Activated naive CD8-positive, alpha-beta T cell treated with anti-CD3 and anti-CD28 coated beads, Interleukin-2, amount 10 ng/mL, durations not matched to agents 7 days and 5 days (primary cell): ENCODE measurements at regions of chr3 and their contacts with region 1.

Region 1: GRCh38 chr3:46368569-46368968 is 2.2 kb upstream of the CCR5 start:
- DNase-seq: peak; percentile 51
- ATAC-seq: peak; percentile 59
- H3K4me3 Mint-ChIP-seq: no peak overlapping the region
- H3K27ac Mint-ChIP-seq: peak overlapping the region; percentile 71
- H3K4me1 Mint-ChIP-seq: peaks cover 65% of the 10 kb centered on the region
- H3K27me3 Mint-ChIP-seq: no peaks in the 10 kb centered on the region

Region 2: DNA sequence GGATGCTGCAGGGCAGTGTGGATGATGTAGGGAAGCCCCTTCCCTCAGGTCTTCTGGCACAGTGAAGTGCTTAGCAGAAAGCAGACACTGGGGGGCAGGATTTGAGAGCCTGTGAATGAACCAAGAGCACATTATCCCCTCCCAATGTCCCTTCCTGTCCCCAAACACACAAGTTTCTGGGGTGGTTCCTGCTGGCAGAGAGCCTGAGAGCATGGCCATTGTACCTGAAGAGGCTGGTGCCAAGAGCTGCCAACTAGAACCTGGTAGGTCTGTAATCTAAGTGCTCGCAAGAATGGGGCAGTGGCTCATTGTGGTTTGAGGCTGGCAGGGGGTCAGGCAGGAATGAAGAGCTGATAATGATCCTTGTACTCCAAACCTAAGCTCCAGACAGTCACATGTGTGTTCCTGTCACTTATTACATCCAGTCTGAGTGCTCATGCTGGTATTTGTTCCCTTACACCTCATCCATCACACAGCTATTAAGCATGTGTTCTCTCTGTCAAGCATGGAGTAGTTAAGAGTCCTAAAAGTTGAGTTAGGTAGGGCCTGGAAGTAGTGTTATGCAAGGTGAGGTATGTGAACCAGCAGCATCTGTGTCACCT is 153.7 kb before region 1 on chr3:
- POLR2A ChIA-PET with region 1: interaction called, 57 read pairs
- DNase-seq: peak; percentile 56
- ATAC-seq: peak; percentile 28
- H3K4me3 Mint-ChIP-seq: no peak overlapping the region
- H3K27ac Mint-ChIP-seq: no peak overlapping the region
- H3K4me1 Mint-ChIP-seq: peaks cover 31% of the 10 kb centered on the region
- H3K27me3 Mint-ChIP-seq: no peaks in the 10 kb centered on the region

Region 3: GRCh38 chr3:46276502-46277099 is 92.0 kb before region 1 on chr3:
- POLR2A ChIA-PET with region 1: interaction called, 35 read pairs
- DNase-seq: peak; percentile 81
- ATAC-seq: peak; percentile 75
- H3K4me3 Mint-ChIP-seq: peak overlapping the region; percentile 3
- H3K27ac Mint-ChIP-seq: peak overlapping the region; percentile 87
- H3K4me1 Mint-ChIP-seq: peaks cover 56% of the 10 kb centered on the region
- H3K27me3 Mint-ChIP-seq: peaks cover 10% of the 10 kb centered on the region

Region 4: DNA sequence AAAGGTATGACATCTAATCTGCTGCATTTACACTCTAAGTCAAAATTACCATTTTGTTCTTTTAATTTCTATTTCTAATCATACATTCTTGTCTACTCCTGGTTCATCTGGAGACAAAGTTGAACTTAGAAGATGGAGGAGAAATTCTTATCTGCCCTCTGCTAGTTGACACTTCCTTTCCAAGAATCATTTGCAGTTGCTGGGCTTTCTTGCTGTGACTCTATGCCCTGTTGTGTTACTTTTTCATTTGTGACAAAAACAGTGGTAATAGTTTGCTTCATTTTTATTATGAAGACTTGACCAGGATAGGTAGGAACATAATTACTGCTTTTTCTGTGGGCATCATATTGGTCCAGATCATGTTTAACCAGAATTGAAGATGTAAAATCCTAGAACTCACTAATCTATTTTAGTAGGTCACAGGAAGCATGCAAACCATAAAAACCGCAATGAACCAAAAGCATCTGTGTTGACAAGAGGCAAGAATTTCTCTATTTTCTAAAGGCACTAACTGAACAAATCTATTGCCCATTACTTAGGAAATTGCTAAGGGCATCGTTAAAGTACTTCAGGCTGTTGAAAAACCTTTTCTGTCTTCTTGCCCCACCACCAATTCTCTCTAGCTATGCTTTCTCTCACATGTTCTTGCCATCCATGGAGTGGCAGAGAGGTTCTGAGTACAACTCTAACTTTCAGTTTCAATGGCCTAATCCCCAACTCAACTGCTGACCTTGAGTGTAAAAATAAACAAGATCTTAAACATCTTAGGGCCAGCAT is 18.9 kb before region 1 on chr3:
- POLR2A ChIA-PET with region 1: interaction called, 56 read pairs
- DNase-seq: no peak
- ATAC-seq: peak; percentile 46
- H3K4me3 Mint-ChIP-seq: peak overlapping the region; percentile 74
- H3K27ac Mint-ChIP-seq: peak overlapping the region; percentile 92
- H3K4me1 Mint-ChIP-seq: peaks cover 59% of the 10 kb centered on the region
- H3K27me3 Mint-ChIP-seq: no peaks in the 10 kb centered on the region

Region 5: DNA sequence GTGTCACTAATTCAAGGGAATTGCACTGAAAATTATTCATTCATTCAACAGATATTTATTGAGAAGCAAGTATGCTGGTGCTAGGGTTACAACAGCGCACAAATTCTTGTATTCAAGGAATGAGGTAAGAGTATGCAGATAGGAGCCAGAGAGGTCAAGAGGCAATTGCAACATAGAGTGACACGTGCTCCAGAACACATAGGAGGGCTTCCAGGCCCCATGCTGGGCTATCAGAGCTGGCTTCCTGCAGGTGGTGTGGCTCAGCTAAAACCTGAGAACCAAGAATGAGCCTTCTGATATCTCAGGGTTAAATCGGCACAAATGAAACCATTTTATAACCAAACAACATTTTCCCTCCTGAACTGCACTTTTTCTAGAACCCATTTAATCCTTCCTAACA is 25.0 kb after region 1 on chr3:
- POLR2A ChIA-PET with region 1: no interaction called
- DNase-seq: no peak
- ATAC-seq: no peak
- H3K4me3 Mint-ChIP-seq: no peak overlapping the region
- H3K27ac Mint-ChIP-seq: no peak overlapping the region
- H3K4me1 Mint-ChIP-seq: peaks cover 25% of the 10 kb centered on the region
- H3K27me3 Mint-ChIP-seq: peaks cover 3% of the 10 kb centered on the region